IMR-90 (cell line): ENCODE measurements at regions of chrX and their contacts with region 1.

Region 1: GRCh38 chrX:5916945-5917344 is 311.7 kb downstream of the NLGN4X start:
- DNase-seq: no peak
- ATAC-seq: no peak
- H3K4me3 ChIP-seq: no peak overlapping the region
- H3K27ac ChIP-seq: no peak overlapping the region
- H3K4me1 ChIP-seq: no peaks in the 10 kb centered on the region
- H3K27me3 ChIP-seq: no peaks in the 10 kb centered on the region
- CTCF ChIP-seq: no peak
- POLR2A ChIP-seq: no peak
- RAD21 ChIP-seq: no peak

Region 2: DNA sequence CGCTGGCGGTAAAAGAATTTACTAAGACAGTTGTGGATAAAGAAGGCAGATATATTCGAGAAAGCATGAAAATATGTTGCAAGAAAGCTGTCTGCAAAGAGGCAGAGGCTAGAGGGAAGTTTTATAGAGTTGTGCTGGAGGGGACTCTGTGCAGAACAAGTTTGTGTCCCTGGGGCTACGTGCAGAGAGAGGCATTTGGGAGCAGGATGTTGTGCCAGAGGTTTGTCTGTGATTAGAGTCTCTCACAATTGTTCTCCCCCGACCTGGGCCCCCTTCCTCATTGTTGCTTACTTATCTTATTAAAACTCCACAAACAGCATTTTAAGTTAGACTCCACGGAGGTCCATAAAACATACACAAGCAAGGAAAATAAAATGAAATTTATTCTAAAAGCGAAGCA is 519.5 kb before region 1 on chrX:
- CTCF ChIA-PET with region 1: no interaction called
- POLR2A ChIA-PET with region 1: no interaction called
- dilution Hi-C with region 1: no loop called
- in situ Hi-C with region 1: no loop called
- intact Hi-C with region 1: no loop called
- DNase-seq: no peak
- ATAC-seq: no peak
- H3K4me3 ChIP-seq: no peak overlapping the region
- H3K27ac ChIP-seq: no peak overlapping the region
- H3K4me1 ChIP-seq: no peaks in the 10 kb centered on the region
- H3K27me3 ChIP-seq: no peaks in the 10 kb centered on the region
- CTCF ChIP-seq: no peak
- POLR2A ChIP-seq: no peak
- RAD21 ChIP-seq: no peak

Region 3: GRCh38 chrX:5823903-5824302 is 93.0 kb before region 1 on chrX:
- CTCF ChIA-PET with region 1: no interaction called
- POLR2A ChIA-PET with region 1: no interaction called
- dilution Hi-C with region 1: no loop called
- in situ Hi-C with region 1: loop called (anchors 25 kb)
- intact Hi-C with region 1: no loop called
- DNase-seq: no peak
- ATAC-seq: no peak
- H3K4me3 ChIP-seq: no peak overlapping the region
- H3K27ac ChIP-seq: no peak overlapping the region
- H3K4me1 ChIP-seq: no peaks in the 10 kb centered on the region
- H3K27me3 ChIP-seq: no peaks in the 10 kb centered on the region
- CTCF ChIP-seq: no peak
- POLR2A ChIP-seq: no peak
- RAD21 ChIP-seq: no peak

Region 4: GRCh38 chrX:6052111-6052745 is 135.3 kb after region 1 on chrX:
- CTCF ChIA-PET with region 1: no interaction called
- POLR2A ChIA-PET with region 1: no interaction called
- dilution Hi-C with region 1: no loop called
- in situ Hi-C with region 1: no loop called
- intact Hi-C with region 1: no loop called
- DNase-seq: no peak
- ATAC-seq: no peak
- H3K4me3 ChIP-seq: no peak overlapping the region
- H3K27ac ChIP-seq: no peak overlapping the region
- H3K4me1 ChIP-seq: no peaks in the 10 kb centered on the region
- H3K27me3 ChIP-seq: no peaks in the 10 kb centered on the region
- CTCF ChIP-seq: no peak
- POLR2A ChIP-seq: no peak
- RAD21 ChIP-seq: no peak